HepG2 (cell line): ENCODE measurements at regions of chr10 and their contacts with region 1.

Region 1: GRCh38 chr10:100962351-100963080 is 6.8 kb upstream of the SEMA4G start:
- DNase-seq: no peak
- ATAC-seq: no peak
- H3K4me3 ChIP-seq: no peak overlapping the region
- H3K27ac ChIP-seq: no peak overlapping the region
- H3K4me1 ChIP-seq: peaks cover 52% of the 10 kb centered on the region
- H3K27me3 ChIP-seq: no peaks in the 10 kb centered on the region
- CTCF ChIP-seq: no peak
- EP300 ChIP-seq: no peak
- POLR2A ChIP-seq: no peak
- RAD21 ChIP-seq: no peak

Region 2: DNA sequence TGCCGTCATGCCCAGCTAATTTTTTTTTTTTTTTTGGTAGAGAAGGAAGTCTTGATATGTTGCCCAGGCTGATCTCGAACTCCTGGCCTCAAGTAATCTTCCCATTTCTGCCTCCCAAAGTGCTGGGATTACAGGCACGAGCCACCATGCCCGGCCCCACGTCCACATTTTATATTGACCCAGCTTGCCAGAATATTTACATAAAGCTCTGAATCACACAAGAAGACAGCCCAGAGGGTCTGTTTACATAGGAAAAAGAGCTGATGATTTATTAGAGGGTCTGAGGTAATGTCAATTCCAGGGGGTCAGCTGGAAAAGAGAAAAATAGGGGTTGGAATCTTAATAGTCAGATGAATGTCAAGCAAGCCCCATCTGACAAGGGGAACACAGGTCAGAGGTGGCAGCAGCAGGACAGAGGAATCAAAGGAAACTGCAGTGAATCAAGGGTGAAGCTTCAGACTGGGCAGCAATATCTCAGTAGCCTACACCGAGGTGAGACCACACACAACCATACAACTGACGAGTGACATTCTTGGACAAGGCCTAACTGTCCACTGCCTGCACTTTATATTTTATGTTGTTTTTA is 65.5 kb before region 1 on chr10:
- CTCF ChIA-PET with region 1: no interaction called
- POLR2A ChIA-PET with region 1: no interaction called
- in situ Hi-C with region 1: no loop called
- intact Hi-C with region 1: no loop called
- DNase-seq: peak; percentile 76
- ATAC-seq: peak; percentile 95
- H3K4me3 ChIP-seq: no peak overlapping the region
- H3K27ac ChIP-seq: peak overlapping the region; percentile 73
- H3K4me1 ChIP-seq: peaks cover 51% of the 10 kb centered on the region
- H3K27me3 ChIP-seq: no peaks in the 10 kb centered on the region; a peak in 1 of 5 replicates
- CTCF ChIP-seq: no peak
- EP300 ChIP-seq: peak in 1 of 2 experiments; percentile 20; a peak in 1 of 4 replicates
- POLR2A ChIP-seq: no peak
- RAD21 ChIP-seq: no peak

Region 3: DNA sequence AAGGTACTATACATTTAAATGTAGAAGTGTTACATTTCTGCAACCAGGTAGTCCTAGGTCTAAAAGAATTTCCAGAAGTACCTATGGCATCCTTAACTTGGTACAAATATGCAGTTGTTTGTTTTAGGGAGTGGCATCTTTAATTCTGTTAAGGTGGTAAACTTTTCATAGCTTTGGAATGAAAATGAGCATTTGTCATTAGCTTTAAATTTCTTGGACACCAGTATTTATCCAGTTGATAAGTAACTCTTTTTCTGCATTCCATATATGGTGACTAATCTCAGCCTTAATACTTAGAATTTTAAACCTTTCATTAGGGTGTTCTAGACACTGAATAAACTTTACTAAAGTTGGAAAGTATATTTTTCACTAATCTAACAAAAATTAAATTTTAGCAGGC is 38.9 kb before region 1 on chr10:
- CTCF ChIA-PET with region 1: no interaction called
- POLR2A ChIA-PET with region 1: no interaction called
- in situ Hi-C with region 1: loop called (anchors 5 kb)
- intact Hi-C with region 1: no loop called
- DNase-seq: no peak
- ATAC-seq: no peak
- H3K4me3 ChIP-seq: no peak overlapping the region
- H3K27ac ChIP-seq: no peak overlapping the region
- H3K4me1 ChIP-seq: no peaks in the 10 kb centered on the region
- H3K27me3 ChIP-seq: no peaks in the 10 kb centered on the region
- CTCF ChIP-seq: no peak
- EP300 ChIP-seq: no peak
- POLR2A ChIP-seq: no peak
- RAD21 ChIP-seq: no peak

Region 4: DNA sequence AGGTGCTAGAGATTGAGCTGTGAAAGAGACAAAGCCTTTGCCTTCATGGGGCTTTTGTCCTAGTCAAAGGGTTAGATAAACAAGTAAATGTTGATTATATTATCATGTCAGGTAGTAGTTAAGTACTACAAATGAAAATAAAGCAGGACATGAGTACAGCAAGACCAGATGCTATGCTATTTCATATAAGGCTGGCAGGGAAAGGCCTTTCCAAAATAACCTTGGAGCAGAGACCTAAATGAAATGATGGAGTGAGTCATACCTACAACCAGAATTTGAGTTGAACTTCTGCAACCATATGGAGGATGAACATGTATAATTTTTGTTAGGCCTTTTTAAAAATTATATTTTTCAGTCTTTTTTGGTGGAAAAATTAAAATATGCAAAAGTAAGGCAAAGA is 16.8 kb before region 1 on chr10:
- CTCF ChIA-PET with region 1: no interaction called
- POLR2A ChIA-PET with region 1: interaction called, 3 read pairs
- in situ Hi-C with region 1: no loop called
- intact Hi-C with region 1: loop called (anchors 1 kb)
- DNase-seq: no peak
- ATAC-seq: no peak
- H3K4me3 ChIP-seq: no peak overlapping the region
- H3K27ac ChIP-seq: no peak overlapping the region
- H3K4me1 ChIP-seq: no peaks in the 10 kb centered on the region
- H3K27me3 ChIP-seq: no peaks in the 10 kb centered on the region
- CTCF ChIP-seq: no peak
- EP300 ChIP-seq: no peak
- POLR2A ChIP-seq: no peak
- RAD21 ChIP-seq: no peak

Region 5: DNA sequence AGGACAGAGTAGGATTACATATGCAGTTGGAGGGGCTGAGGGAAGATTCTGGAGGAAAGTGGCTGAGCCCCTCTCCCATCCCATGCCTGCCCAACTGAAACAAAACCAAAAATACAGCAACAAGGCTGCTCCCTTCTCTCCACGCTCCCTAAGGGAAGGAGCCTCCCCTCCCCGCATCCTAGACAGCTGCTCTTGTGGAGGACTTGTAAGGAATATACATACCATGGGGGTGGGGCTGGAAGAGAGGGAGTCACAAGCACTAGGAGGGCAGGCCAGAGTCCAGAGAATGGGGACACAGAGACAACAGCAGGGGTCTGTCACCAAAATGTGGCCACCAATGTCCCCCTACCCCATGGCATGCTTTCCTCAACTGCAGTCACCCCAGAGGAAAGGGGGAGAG is 1144.5 kb after region 1 on chr10:
- CTCF ChIA-PET with region 1: no interaction called
- POLR2A ChIA-PET with region 1: no interaction called
- in situ Hi-C with region 1: no loop called
- intact Hi-C with region 1: no loop called
- DNase-seq: no peak
- ATAC-seq: no peak
- H3K4me3 ChIP-seq: no peak overlapping the region
- H3K27ac ChIP-seq: no peak overlapping the region
- H3K4me1 ChIP-seq: peaks cover under 1% of the 10 kb centered on the region
- H3K27me3 ChIP-seq: no peaks in the 10 kb centered on the region
- CTCF ChIP-seq: no peak
- EP300 ChIP-seq: no peak
- POLR2A ChIP-seq: no peak
- RAD21 ChIP-seq: no peak